H1 (cell line): ENCODE measurements at regions of chr20 and their contacts with region 1.

Region 1: GRCh38 chr20:49435659-49436058 is 46.8 kb downstream of the KCNB1 start:
- DNase-seq: no peak
- H3K4me3 ChIP-seq: no peak overlapping the region
- H3K27ac ChIP-seq: no peak overlapping the region
- H3K4me1 ChIP-seq: no peaks in the 10 kb centered on the region
- H3K27me3 ChIP-seq: no peaks in the 10 kb centered on the region
- CTCF ChIP-seq: peak; percentile 41 to 56 (median 53)
- EP300 ChIP-seq: no peak
- POLR2A ChIP-seq: no peak
- RAD21 ChIP-seq: peak; percentile 59 to 75; a peak in 3 of 4 replicates

Region 2: DNA sequence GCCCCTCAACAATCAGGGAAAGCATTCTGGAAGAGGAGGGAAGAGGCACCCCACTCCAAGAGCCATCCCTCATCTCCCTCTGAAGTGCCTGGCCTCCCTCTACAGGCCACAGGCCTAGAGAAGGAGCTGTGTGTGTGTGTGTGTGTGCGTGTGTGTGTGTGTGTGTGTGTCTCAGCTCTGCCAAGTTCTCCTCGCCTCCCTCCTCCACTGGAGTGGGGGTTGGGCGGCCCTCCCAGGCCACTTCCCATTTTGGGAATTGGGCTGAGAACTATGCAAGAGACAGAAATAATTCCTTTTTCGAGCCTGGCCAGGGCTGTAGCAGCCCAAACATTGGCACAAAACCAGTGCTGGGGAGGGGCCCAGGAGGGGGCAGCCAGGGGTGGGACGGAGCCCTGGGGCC is 11.1 kb after region 1 on chr20:
- CTCF ChIA-PET with region 1: interaction called, 19 read pairs
- POLR2A ChIA-PET with region 1: interaction called, 3 read pairs
- DNase-seq: peak in 1 of 2 experiments; percentile 65
- H3K4me3 ChIP-seq: no peak overlapping the region
- H3K27ac ChIP-seq: no peak overlapping the region
- H3K4me1 ChIP-seq: peaks cover 14 to 29% (median 17%) of the 10 kb centered on the region in 4 experiments
- H3K27me3 ChIP-seq: no peaks in the 10 kb centered on the region; a peak in 1 of 7 replicates
- CTCF ChIP-seq: no peak
- EP300 ChIP-seq: no peak
- POLR2A ChIP-seq: no peak
- RAD21 ChIP-seq: peak in 1 of 2 experiments; percentile 43; a peak in 3 of 4 replicates